Ascending aorta (tissue), 2 donors: ENCODE measurements at regions of chr11 and their contacts with region 1.

Region 1: DNA sequence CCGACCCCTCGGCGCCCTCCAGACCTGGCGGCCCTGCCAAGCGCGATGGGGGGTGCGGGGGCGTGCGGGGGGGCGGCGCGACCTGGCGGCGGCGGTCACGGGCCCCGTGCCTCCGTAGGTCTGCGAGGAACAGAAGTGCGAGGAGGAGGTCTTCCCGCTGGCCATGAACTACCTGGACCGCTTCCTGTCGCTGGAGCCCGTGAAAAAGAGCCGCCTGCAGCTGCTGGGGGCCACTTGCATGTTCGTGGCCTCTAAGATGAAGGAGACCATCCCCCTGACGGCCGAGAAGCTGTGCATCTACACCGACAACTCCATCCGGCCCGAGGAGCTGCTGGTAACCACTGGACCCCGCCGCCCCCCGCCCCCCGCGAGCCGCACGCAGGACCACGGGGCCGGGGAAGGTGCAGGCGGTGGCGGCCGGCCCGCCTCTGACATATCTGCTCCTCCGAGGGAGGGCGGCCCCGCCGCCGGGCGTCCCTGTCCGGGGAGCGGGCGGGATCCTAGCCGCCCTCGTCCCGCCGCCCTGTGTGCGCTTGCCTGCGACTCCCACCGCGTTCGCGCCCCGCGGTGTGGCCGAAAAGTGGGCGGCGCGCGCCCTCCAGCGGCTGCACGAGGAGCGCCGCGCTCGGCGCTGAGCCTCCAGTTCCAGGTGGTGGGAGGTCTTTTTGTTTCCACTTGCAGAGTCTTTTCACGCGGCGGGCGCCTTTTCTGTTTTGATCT is 2.1 kb downstream of the CCND1 start:
- DNase-seq: peak in 1 of 2 donors; percentile 86
- H3K4me3 ChIP-seq: peak overlapping the region; percentile 88
- H3K27ac ChIP-seq: peak overlapping the region; percentile 77 to 84
- H3K4me1 ChIP-seq: peaks cover 10 to 35% of the 10 kb centered on the region in 2 donors
- H3K27me3 ChIP-seq: no peaks in the 10 kb centered on the region
- CTCF ChIP-seq: peak; percentile 77 to 98 (median 91)

Region 2: GRCh38 chr11:69010964-69011623 is 632.0 kb before region 1 on chr11:
- intact Hi-C with region 1: loop called (anchors 2 kb)
- DNase-seq: peak in 1 of 2 donors; percentile 91
- H3K4me3 ChIP-seq: peak overlapping the region; percentile 75 to 84
- H3K27ac ChIP-seq: peak overlapping the region; percentile 93 to 95
- H3K4me1 ChIP-seq: peaks cover 18 to 49% of the 10 kb centered on the region in 2 donors
- H3K27me3 ChIP-seq: no peaks in the 10 kb centered on the region
- CTCF ChIP-seq: no peak

Region 3: DNA sequence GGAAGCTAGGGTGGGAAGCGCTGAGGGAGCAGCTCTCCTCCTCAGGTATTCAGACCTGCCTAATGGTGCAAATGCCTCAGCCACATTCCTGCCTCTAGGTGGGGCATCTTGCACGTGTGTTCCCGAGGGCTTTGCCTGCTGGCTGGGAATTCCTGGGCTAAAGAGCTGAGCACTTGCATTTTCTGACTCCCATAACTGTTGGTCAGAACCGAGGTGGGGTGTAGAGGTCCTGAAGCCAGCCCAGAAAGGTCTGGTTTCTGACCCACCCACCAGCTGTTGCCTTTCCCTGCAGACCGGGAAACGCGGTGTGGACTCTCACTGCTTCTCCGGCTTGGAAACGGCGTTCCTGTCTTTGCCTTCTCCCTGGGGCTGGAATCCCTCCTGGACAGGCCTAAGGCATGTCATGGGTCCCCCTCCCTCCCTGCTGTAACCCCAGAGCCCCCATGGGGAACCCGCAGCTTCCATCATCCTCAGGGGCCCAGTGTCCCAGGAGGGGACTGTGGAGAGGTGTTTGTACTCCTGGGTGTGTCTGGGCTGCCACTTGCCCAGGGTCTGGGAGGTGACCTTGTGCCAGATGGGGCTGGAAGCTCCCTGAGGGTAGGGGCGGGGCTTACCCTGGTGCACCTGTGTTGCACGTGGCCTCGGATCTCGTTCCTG is 511.3 kb before region 1 on chr11:
- intact Hi-C with region 1: loop called (anchors 2 kb)
- DNase-seq: peak; percentile 26 to 84
- H3K4me3 ChIP-seq: no peak overlapping the region
- H3K27ac ChIP-seq: peak overlapping the region; percentile 72 to 73
- H3K4me1 ChIP-seq: peaks cover 0 to 21% of the 10 kb centered on the region in 2 donors
- H3K27me3 ChIP-seq: no peaks in the 10 kb centered on the region
- CTCF ChIP-seq: peak; percentile 85 to 89 (median 86)

Region 4: GRCh38 chr11:69321877-69322361 is 321.2 kb before region 1 on chr11:
- intact Hi-C with region 1: loop called (anchors 10 kb)
- DNase-seq: peak; percentile 78 to 94
- H3K4me3 ChIP-seq: no peak overlapping the region
- H3K27ac ChIP-seq: peak overlapping the region; percentile 86 to 90
- H3K4me1 ChIP-seq: peaks cover 8 to 20% of the 10 kb centered on the region in 2 donors
- H3K27me3 ChIP-seq: no peaks in the 10 kb centered on the region
- CTCF ChIP-seq: no peak

Region 5: GRCh38 chr11:69443138-69443967 is 199.7 kb before region 1 on chr11:
- intact Hi-C with region 1: loop called (anchors 1 kb)
- DNase-seq: peak; percentile 33 to 91
- H3K4me3 ChIP-seq: peak overlapping the region; percentile 38 to 61
- H3K27ac ChIP-seq: peak overlapping the region; percentile 50 to 52
- H3K4me1 ChIP-seq: peaks cover 6 to 13% of the 10 kb centered on the region in 2 donors
- H3K27me3 ChIP-seq: no peaks in the 10 kb centered on the region
- CTCF ChIP-seq: no peak

Region 6: DNA sequence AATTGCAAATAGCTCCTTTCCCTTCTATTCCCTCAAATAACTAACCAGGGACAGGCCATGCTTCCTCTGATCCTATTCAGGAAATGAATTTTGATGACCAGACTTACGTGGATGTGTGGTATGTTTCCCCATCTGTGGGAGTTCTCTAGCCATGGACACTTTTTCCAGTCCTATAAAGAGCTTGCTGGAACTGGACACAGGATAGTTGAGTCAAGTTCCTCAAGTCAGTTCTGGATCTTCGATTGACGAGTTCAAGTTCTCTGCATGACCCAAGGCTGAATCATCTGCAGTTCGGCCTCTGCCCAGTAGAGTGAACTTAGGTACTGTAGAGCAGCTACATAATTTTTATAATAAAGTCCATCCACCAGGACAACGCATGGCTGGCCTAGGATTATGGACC is 54.8 kb before region 1 on chr11:
- intact Hi-C with region 1: no loop called
- DNase-seq: peak in 1 of 2 donors; percentile 22
- H3K4me3 ChIP-seq: no peak overlapping the region
- H3K27ac ChIP-seq: no peak overlapping the region
- H3K4me1 ChIP-seq: no peaks in the 10 kb centered on the region
- H3K27me3 ChIP-seq: no peaks in the 10 kb centered on the region
- CTCF ChIP-seq: peak in 1 of 3 experiments; percentile 12

Region 7: GRCh38 chr11:69670158-69670845 is 27.2 kb after region 1 on chr11:
- intact Hi-C with region 1: loop called (anchors 2 kb)
- DNase-seq: peak; percentile 34 to 92
- H3K4me3 ChIP-seq: no peak overlapping the region
- H3K27ac ChIP-seq: peak overlapping the region in 1 of 2 donors; percentile 27
- H3K4me1 ChIP-seq: peaks cover 7 to 20% of the 10 kb centered on the region in 2 donors
- H3K27me3 ChIP-seq: no peaks in the 10 kb centered on the region
- CTCF ChIP-seq: peak; percentile 92 to 95 (median 93)

Region 8: GRCh38 chr11:69700278-69701140 is 57.4 kb after region 1 on chr11:
- intact Hi-C with region 1: no loop called
- DNase-seq: no peak
- H3K4me3 ChIP-seq: no peak overlapping the region
- H3K27ac ChIP-seq: no peak overlapping the region
- H3K4me1 ChIP-seq: peaks cover 0 to 14% of the 10 kb centered on the region in 2 donors
- H3K27me3 ChIP-seq: peaks cover 16% of the 10 kb centered on the region
- CTCF ChIP-seq: no peak